Transverse colon (tissue), 4 donors: ENCODE measurements at regions of chr18 and their contacts with region 1.

Region 1: DNA sequence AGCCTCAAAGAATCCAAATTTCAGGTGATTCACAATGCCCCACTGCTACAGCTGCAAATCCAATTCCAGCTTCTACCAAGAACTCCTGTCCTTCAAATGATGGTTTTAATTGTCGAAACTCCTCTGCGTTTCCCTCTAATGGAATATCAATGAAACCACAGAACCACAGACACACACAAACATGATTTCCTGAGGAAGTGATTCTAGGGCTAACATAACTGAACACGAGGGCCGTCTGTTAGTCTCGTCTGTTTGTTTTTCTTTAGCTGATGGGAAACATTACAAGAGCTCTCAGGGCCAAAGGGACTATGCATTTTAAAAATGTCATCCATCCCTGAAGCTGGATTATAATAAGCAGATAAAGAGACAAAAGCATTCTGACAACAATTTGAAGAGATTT is 59.4 kb downstream of the RNF152 start:
- DNase-seq: no peak
- H3K4me3 ChIP-seq: no peak overlapping the region
- H3K27ac ChIP-seq: no peak overlapping the region
- H3K4me1 ChIP-seq: peaks cover 0 to 8% (median 0%) of the 10 kb centered on the region in 4 donors
- H3K27me3 ChIP-seq: no peaks in the 10 kb centered on the region
- CTCF ChIP-seq: no peak
- EP300 ChIP-seq: no peak
- POLR2A ChIP-seq: no peak

Region 2: DNA sequence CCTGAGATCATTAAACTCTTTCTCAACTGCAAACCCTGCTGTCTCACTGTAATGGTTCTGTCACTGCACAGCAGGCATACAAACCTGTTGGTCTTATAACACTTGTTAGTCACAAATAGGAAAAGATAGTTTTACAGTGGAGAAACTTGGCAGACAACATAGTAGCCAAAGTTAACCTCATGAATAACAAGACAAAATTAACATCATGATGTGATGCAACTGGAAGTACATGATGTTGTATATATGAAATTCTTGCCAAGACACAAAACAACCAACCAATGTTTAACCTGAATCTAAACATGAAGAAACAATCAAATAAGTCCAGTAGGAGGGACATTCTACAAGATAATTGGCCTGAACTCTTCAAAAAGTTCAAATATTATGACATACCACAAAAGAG is 129.9 kb before region 1 on chr18:
- in situ Hi-C with region 1: no loop called
- intact Hi-C with region 1: no loop called
- DNase-seq: no peak
- H3K4me3 ChIP-seq: no peak overlapping the region
- H3K27ac ChIP-seq: no peak overlapping the region
- H3K4me1 ChIP-seq: no peaks in the 10 kb centered on the region
- H3K27me3 ChIP-seq: no peaks in the 10 kb centered on the region
- CTCF ChIP-seq: no peak
- EP300 ChIP-seq: no peak
- POLR2A ChIP-seq: no peak

Region 3: GRCh38 chr18:61770279-61770678 is 63.1 kb before region 1 on chr18:
- in situ Hi-C with region 1: loop called in 1 of 4 experiments (anchors 10 kb)
- intact Hi-C with region 1: no loop called
- DNase-seq: no peak
- H3K4me3 ChIP-seq: no peak overlapping the region
- H3K27ac ChIP-seq: no peak overlapping the region
- H3K4me1 ChIP-seq: no peaks in the 10 kb centered on the region
- H3K27me3 ChIP-seq: no peaks in the 10 kb centered on the region
- CTCF ChIP-seq: no peak
- EP300 ChIP-seq: no peak
- POLR2A ChIP-seq: no peak

Region 4: DNA sequence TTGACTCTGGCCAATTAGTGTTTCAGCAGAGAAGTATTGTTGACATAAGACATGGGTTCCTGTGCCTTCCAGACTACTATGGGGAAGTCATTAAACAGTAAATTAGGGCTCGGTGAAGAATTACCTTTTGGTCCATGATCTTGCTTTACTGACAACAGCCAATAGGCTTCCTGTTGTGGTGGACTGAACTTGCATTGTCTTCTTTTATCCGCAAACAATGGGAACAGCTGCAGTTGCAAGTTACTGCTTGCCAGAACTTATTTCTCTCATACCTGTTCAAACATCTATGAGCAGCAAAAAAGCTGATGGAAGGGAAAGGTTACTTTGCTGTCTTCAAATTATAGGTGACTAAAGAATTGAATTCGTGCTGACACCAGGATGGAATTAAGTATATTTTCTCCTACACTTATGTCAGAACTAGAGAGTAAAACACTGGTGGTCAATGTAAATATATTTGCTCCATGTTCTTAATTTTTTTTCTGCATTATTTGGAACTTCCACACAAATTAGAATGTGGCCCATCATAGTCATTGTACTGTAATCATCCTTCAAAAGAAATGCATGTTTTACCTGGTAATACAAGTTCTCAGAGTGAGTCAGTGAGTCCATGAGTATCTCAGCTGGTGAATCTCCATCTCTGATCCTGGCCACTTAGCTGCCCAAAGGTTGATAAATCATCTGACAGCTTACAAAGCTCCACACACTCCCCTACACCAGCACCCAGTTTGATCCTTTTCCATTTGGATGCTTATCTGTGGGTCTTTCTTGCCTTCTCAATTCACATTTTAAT is 96.7 kb after region 1 on chr18:
- in situ Hi-C with region 1: no loop called
- intact Hi-C with region 1: no loop called
- DNase-seq: no peak
- H3K4me3 ChIP-seq: no peak overlapping the region
- H3K27ac ChIP-seq: no peak overlapping the region
- H3K4me1 ChIP-seq: no peaks in the 10 kb centered on the region
- H3K27me3 ChIP-seq: no peaks in the 10 kb centered on the region
- CTCF ChIP-seq: no peak
- EP300 ChIP-seq: no peak
- POLR2A ChIP-seq: no peak

Region 5: DNA sequence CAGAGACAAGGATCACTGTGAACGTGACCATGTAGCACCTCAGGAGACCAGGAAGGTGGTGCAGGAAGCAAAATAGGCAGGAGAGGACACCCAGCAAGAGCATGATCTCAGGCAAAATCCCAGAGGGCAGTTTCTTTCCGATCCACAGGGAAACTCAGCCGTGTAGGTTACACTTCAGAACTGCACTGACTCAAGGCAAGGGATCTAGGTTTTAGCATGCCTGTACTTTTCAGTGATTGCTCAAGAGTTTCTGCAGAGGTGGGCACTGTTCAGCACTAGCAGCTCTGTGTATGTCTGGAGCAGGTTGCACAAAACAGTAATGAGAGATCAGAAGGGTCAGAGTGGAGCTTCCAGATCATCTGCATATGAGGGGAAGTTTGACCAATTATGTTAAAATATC is 176.1 kb after region 1 on chr18:
- in situ Hi-C with region 1: no loop called
- intact Hi-C with region 1: no loop called
- DNase-seq: no peak
- H3K4me3 ChIP-seq: no peak overlapping the region
- H3K27ac ChIP-seq: no peak overlapping the region
- H3K4me1 ChIP-seq: no peaks in the 10 kb centered on the region
- H3K27me3 ChIP-seq: no peaks in the 10 kb centered on the region
- CTCF ChIP-seq: no peak
- EP300 ChIP-seq: no peak
- POLR2A ChIP-seq: no peak